ENCODE measurements at regions of chr2 and their contacts with region 1.

Region 1: GRCh38 chr2:96138179-96139145 is at the start of gene ASTL:
- DNase-seq: peak; percentile 50 to 86 (median 73)
- ATAC-seq: peak; percentile 30
- H3K4me3 ChIP-seq: no peak within 1 kb of the TSS
- H3K4me3 Mint-ChIP-seq: no peak within 1 kb of the TSS
- H3K27ac ChIP-seq: peak within 1 kb of the TSS in 1 of 2 experiments; percentile 59
- H3K27ac Mint-ChIP-seq: peak within 1 kb of the TSS; percentile 63
- H3K4me1 ChIP-seq: peaks cover 23% of the 10 kb centered on the region
- H3K4me1 Mint-ChIP-seq: peaks cover 31% of the 10 kb centered on the region
- H3K27me3 ChIP-seq: no peaks in the 10 kb centered on the region
- H3K27me3 Mint-ChIP-seq: no peaks in the 10 kb centered on the region
- CTCF ChIP-seq: peak; percentile 52
- total RNA-seq, gene ASTL: 16.6 to 17.5 TPM

Region 2: GRCh38 chr2:94602466-94602865 is 1536.0 kb before region 1 on chr2:
- CTCF ChIA-PET with region 1: no interaction called
- POLR2A ChIA-PET with region 1: no interaction called
- intact Hi-C with region 1: no loop called
- DNase-seq: no peak
- ATAC-seq: no peak
- H3K4me3 ChIP-seq: no peak overlapping the region
- H3K4me3 Mint-ChIP-seq: no peak overlapping the region
- H3K27ac ChIP-seq: no peak overlapping the region
- H3K27ac Mint-ChIP-seq: no peak overlapping the region
- H3K4me1 ChIP-seq: no peaks in the 10 kb centered on the region
- H3K4me1 Mint-ChIP-seq: no peaks in the 10 kb centered on the region
- H3K27me3 ChIP-seq: no peaks in the 10 kb centered on the region
- H3K27me3 Mint-ChIP-seq: peaks cover 2% of the 10 kb centered on the region
- CTCF ChIP-seq: no peak

Region 3: GRCh38 chr2:96116879-96117697 is 21.4 kb before region 1 on chr2:
- CTCF ChIA-PET with region 1: interaction called, 32 read pairs
- POLR2A ChIA-PET with region 1: interaction called, 6 read pairs
- intact Hi-C with region 1: loop called (anchors 2 kb)
- DNase-seq: peak; percentile 31 to 81 (median 61)
- ATAC-seq: peak; percentile 72
- H3K4me3 ChIP-seq: peak overlapping the region; percentile 7 to 50
- H3K4me3 Mint-ChIP-seq: peak overlapping the region; percentile 76
- H3K27ac ChIP-seq: no peak overlapping the region
- H3K27ac Mint-ChIP-seq: peak overlapping the region; percentile 74
- H3K4me1 ChIP-seq: peaks cover 8% of the 10 kb centered on the region
- H3K4me1 Mint-ChIP-seq: peaks cover 12% of the 10 kb centered on the region
- H3K27me3 ChIP-seq: peaks cover 0 to 3% of the 10 kb centered on the region in 2 experiments
- H3K27me3 Mint-ChIP-seq: peaks cover 23% of the 10 kb centered on the region
- CTCF ChIP-seq: peak; percentile 84

Region 4: DNA sequence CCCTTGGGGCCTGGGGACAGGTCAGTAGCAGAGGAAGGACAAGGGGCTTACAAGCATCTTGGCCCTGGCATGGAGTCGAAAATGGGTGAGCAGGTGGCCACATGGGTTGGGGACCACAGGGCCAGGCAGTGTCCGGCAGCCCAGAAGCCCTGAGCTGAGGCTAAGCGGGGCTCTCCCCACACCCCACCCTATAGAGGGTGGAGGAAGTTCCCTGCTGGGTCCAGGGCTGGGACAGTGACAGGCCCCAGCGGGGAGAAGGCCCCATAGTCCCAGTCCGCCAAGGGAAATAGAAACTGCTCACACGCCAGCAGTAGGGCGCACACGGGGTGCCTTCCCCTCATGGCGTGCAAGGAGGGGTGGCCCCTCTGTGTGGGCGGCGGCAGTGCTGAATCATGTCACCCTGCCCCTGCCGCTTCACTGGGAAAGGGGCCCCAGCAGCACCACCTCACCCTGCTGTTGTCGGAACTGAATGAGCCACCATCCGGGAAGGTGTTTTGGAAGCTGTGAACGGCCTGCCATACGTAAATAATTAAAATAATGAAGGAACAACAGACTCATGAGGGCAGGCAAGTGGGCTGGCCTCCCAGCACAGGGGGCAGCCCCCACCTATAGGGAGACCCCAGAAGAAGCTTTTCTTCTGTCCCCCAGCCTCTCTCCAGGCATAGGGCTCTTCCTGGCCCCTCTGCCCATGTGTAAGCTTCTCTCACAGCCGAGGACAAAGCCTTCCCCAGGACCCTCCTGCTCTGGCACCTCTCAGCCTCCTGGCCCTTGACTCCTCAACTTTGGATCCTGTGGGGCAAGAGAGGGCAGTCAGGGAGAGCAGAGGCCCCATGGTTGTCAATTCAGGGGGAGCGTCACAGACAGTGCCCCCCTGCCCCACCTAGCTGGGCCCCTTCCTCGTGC is 19.4 kb after region 1 on chr2:
- CTCF ChIA-PET with region 1: interaction called, 32 read pairs
- POLR2A ChIA-PET with region 1: interaction called, 70 read pairs
- intact Hi-C with region 1: no loop called
- DNase-seq: peak in 8 of 9 experiments; percentile 65 to 92 (median 84)
- ATAC-seq: peak; percentile 81
- H3K4me3 ChIP-seq: peak overlapping the region; percentile 12 to 32
- H3K4me3 Mint-ChIP-seq: peak overlapping the region; percentile 73
- H3K27ac ChIP-seq: peak overlapping the region; percentile 40 to 88
- H3K27ac Mint-ChIP-seq: peak overlapping the region; percentile 92
- H3K4me1 ChIP-seq: peaks cover 69% of the 10 kb centered on the region
- H3K4me1 Mint-ChIP-seq: peaks cover 83% of the 10 kb centered on the region
- H3K27me3 ChIP-seq: no peaks in the 10 kb centered on the region
- H3K27me3 Mint-ChIP-seq: no peaks in the 10 kb centered on the region
- CTCF ChIP-seq: no peak

Region 5: GRCh38 chr2:96164459-96165184 is 26.2 kb after region 1 on chr2:
- CTCF ChIA-PET with region 1: interaction called, 775 read pairs
- POLR2A ChIA-PET with region 1: interaction called, 70 read pairs
- intact Hi-C with region 1: loop called in 1 of 2 experiments (anchors 1 kb)
- DNase-seq: peak in 6 of 9 experiments; percentile 52 to 91 (median 80)
- ATAC-seq: peak; percentile 72
- H3K4me3 ChIP-seq: peak overlapping the region; percentile 25 to 37
- H3K4me3 Mint-ChIP-seq: peak overlapping the region; percentile 78
- H3K27ac ChIP-seq: peak overlapping the region; percentile 63 to 95
- H3K27ac Mint-ChIP-seq: peak overlapping the region; percentile 98
- H3K4me1 ChIP-seq: peaks cover 47% of the 10 kb centered on the region
- H3K4me1 Mint-ChIP-seq: peaks cover 60% of the 10 kb centered on the region
- H3K27me3 ChIP-seq: no peaks in the 10 kb centered on the region
- H3K27me3 Mint-ChIP-seq: no peaks in the 10 kb centered on the region
- CTCF ChIP-seq: no peak

Region 6: GRCh38 chr2:96180521-96180920 is 42.1 kb after region 1 on chr2:
- CTCF ChIA-PET with region 1: interaction called, 775 read pairs
- POLR2A ChIA-PET with region 1: interaction called, 68 read pairs
- intact Hi-C with region 1: no loop called
- DNase-seq: peak in 2 of 9 experiments; percentile 10 to 41
- ATAC-seq: no peak
- H3K4me3 ChIP-seq: no peak overlapping the region
- H3K4me3 Mint-ChIP-seq: no peak overlapping the region
- H3K27ac ChIP-seq: no peak overlapping the region
- H3K27ac Mint-ChIP-seq: no peak overlapping the region
- H3K4me1 ChIP-seq: no peaks in the 10 kb centered on the region
- H3K4me1 Mint-ChIP-seq: peaks cover 9% of the 10 kb centered on the region
- H3K27me3 ChIP-seq: no peaks in the 10 kb centered on the region
- H3K27me3 Mint-ChIP-seq: no peaks in the 10 kb centered on the region
- CTCF ChIP-seq: no peak

Region 7: DNA sequence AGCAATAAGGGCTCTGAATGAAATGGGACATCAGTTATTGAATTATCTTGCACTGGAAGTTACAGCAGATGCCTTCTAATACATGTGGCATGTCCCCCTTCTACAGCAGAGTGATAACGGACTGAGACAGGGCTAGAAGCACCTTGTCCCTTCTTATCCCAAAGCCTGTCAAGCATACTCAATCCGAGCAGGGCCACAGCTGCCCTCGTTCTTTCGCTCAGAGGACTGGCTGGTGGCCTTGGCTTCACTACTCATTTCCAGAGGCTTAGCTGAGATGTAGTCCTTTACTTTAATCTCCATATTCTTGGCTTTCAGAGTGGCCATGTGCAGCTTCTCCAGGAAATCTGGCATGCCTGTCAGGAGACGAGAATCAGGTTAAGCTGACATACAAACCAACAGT is 48.1 kb after region 1 on chr2:
- CTCF ChIA-PET with region 1: interaction called, 10 read pairs
- POLR2A ChIA-PET with region 1: no interaction called
- intact Hi-C with region 1: no loop called
- DNase-seq: no peak
- ATAC-seq: no peak
- H3K4me3 ChIP-seq: no peak overlapping the region
- H3K4me3 Mint-ChIP-seq: no peak overlapping the region
- H3K27ac ChIP-seq: no peak overlapping the region
- H3K27ac Mint-ChIP-seq: no peak overlapping the region
- H3K4me1 ChIP-seq: no peaks in the 10 kb centered on the region
- H3K4me1 Mint-ChIP-seq: peaks cover under 1% of the 10 kb centered on the region
- H3K27me3 ChIP-seq: no peaks in the 10 kb centered on the region
- H3K27me3 Mint-ChIP-seq: no peaks in the 10 kb centered on the region
- CTCF ChIP-seq: no peak

Region 8: DNA sequence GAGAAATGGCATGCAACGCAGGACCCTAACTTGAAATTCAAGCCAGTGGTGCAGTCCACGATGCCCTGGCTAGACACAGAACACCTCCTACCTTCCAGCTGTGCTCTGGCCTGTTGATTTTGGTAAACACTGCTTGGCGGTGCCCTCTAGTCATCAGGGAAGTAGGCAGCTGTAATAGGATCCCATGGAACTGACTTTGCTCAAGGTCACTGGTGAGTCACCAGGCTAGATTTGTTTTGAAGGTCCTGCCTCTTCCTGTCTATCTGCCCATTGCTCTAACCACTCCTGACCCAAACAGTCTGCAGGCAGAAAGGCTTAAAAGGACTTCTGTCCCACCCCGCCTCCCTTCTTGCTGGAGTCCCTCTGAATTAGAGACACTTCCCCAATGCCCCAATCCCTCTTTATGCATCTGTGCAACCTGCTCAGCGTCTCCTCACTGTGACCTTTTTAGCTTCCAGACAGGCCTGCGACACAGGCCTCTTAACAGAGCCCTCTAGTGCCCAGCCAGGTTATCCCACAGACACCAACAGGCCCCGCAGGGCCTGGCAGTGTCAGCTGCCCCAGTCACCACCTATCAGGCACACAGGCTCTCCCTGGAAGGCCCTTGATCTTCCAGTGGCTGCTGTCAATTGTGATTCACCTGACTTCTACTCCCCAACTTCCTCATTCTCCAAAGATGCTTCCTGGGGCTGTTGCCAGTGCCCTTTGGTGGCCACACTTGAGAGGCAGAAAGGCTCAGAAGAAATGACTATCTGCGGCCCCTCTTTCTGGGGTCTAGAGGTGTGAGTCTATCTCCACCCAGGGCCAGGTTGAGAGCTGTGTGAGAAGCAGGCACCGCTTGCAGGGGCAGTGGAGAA is 122.2 kb after region 1 on chr2:
- CTCF ChIA-PET with region 1: interaction called, 17 read pairs
- POLR2A ChIA-PET with region 1: no interaction called
- intact Hi-C with region 1: loop called in 1 of 2 experiments (anchors 1 kb)
- DNase-seq: peak in 4 of 9 experiments; percentile 28 to 55 (median 34)
- ATAC-seq: peak; percentile 32
- H3K4me3 ChIP-seq: no peak overlapping the region
- H3K4me3 Mint-ChIP-seq: peak overlapping the region; percentile 42
- H3K27ac ChIP-seq: peak overlapping the region in 1 of 2 experiments; percentile 3
- H3K27ac Mint-ChIP-seq: peak overlapping the region; percentile 77
- H3K4me1 ChIP-seq: peaks cover 77% of the 10 kb centered on the region
- H3K4me1 Mint-ChIP-seq: peaks cover 72% of the 10 kb centered on the region
- H3K27me3 ChIP-seq: no peaks in the 10 kb centered on the region
- H3K27me3 Mint-ChIP-seq: no peaks in the 10 kb centered on the region
- CTCF ChIP-seq: no peak

Region 9: DNA sequence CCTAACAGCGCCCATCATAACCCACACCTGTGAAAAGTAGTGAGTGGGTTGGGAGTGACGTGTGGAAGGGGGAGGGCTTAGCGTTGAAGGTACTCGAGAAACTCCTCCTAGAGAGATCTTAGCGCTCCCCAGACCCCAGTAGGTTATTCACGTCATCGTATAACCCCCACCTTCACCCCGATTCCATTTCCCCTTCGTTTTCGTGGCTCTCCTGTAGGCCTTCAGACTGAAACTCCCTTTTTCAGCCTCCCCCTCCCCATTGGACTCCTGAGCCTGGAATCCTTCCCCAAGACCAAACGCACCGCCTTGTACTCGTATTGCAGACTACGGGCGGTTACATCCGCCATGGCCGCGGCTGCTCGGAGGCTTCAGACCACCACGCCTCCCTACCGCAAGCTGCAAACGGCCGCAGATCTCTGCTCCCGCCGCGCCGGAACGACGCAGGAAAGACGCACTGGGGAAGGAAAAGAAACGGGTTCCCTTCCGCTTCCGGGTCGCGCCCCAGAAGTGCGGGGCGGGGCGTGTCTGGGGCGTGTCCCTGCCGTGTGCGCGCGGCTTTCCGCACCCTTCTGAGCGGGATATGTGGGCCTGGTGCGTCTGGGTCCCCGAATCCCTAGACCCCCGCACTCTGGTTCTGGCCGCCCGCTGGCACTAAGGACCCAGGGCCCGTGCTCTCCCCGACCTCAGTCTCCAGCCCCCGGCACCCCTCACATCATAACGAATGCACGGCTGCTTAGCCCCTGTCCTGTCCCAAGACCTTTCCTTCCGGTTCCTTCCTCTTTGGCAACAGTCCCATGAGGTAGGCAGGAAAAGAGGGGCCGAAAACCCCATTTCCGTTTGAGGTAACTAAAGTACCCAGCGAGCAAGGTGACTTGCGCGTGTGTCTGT is 166.9 kb after region 1 on chr2 and contains the start of gene SNRNP200:
- CTCF ChIA-PET with region 1: no interaction called
- POLR2A ChIA-PET with region 1: no interaction called
- intact Hi-C with region 1: no loop called
- DNase-seq: peak; percentile 78 to 97 (median 91)
- ATAC-seq: peak; percentile 82
- H3K4me3 ChIP-seq: peak within 1 kb of the TSS; percentile 84 to 95
- H3K4me3 Mint-ChIP-seq: peak within 1 kb of the TSS; percentile 100
- H3K27ac ChIP-seq: peak within 1 kb of the TSS; percentile 96 to 98
- H3K27ac Mint-ChIP-seq: peak within 1 kb of the TSS; percentile 100
- H3K4me1 ChIP-seq: peaks cover 39% of the 10 kb centered on the region
- H3K4me1 Mint-ChIP-seq: peaks cover 55% of the 10 kb centered on the region
- H3K27me3 ChIP-seq: no peaks in the 10 kb centered on the region
- H3K27me3 Mint-ChIP-seq: no peaks in the 10 kb centered on the region
- CTCF ChIP-seq: no peak
- total RNA-seq, gene SNRNP200: 318 to 348 TPM

Measured in CD8-positive, alpha-beta T cell (primary cell).